Lower leg skin (tissue), 4 donors: ENCODE measurements at regions of chr15 and their contacts with region 1.

Region 1: GRCh38 chr15:81106560-81106959 is 27.5 kb upstream of the CFAP161 start:
- DNase-seq: peak in 1 of 2 donors; percentile 39
- H3K4me3 ChIP-seq: no peak overlapping the region
- CTCF ChIP-seq: peak in 1 of 3 donors; percentile 60
- POLR2A ChIP-seq: no peak

Region 2: GRCh38 chr15:80989518-80990478 is 116.8 kb before region 1 on chr15 and contains the start of gene MESD:
- intact Hi-C with region 1: loop called (anchors 10 kb)
- DNase-seq: peak; percentile 97 to 100
- H3K4me3 ChIP-seq: peak within 1 kb of the TSS; percentile 72
- CTCF ChIP-seq: no peak
- POLR2A ChIP-seq: peak in 1 of 2 donors; percentile 43
- total RNA-seq, gene MESD: 17.1 to 18.3 (median 17.7) TPM

Region 3: GRCh38 chr15:81155375-81156218 is 49.0 kb after region 1 on chr15:
- intact Hi-C with region 1: loop called (anchors 10 kb)
- DNase-seq: peak; percentile 81 to 88
- H3K4me3 ChIP-seq: no peak overlapping the region
- CTCF ChIP-seq: peak in 1 of 3 donors; percentile 24
- POLR2A ChIP-seq: no peak

Region 4: GRCh38 chr15:81265944-81266775 is 159.6 kb after region 1 on chr15:
- intact Hi-C with region 1: loop called (anchors 5 kb)
- DNase-seq: peak; percentile 77 to 96
- H3K4me3 ChIP-seq: no peak overlapping the region
- CTCF ChIP-seq: peak in 1 of 3 donors; percentile 77
- POLR2A ChIP-seq: no peak